Pancreas (tissue), 10 donors: ENCODE measurements at regions of chr10 and their contacts with region 1.

Region 1: GRCh38 chr10:74262856-74263255 is 111.8 kb downstream of the ADK start:
- DNase-seq: no peak
- ATAC-seq: no peak
- H3K4me3 ChIP-seq: no peak overlapping the region
- H3K27ac ChIP-seq: no peak overlapping the region
- H3K4me1 ChIP-seq: no peaks in the 10 kb centered on the region
- H3K27me3 ChIP-seq: no peaks in the 10 kb centered on the region
- CTCF ChIP-seq: no peak

Region 2: GRCh38 chr10:75035975-75036708 is 773.3 kb after region 1 on chr10:
- intact Hi-C with region 1: loop called in 1 of 3 experiments (anchors 10 kb)
- DNase-seq: no peak
- ATAC-seq: no peak
- H3K4me3 ChIP-seq: no peak overlapping the region
- H3K27ac ChIP-seq: no peak overlapping the region
- H3K4me1 ChIP-seq: no peaks in the 10 kb centered on the region
- H3K27me3 ChIP-seq: no peaks in the 10 kb centered on the region
- CTCF ChIP-seq: no peak

Region 3: GRCh38 chr10:75235375-75236177 is 972.7 kb after region 1 on chr10 and contains the start of gene COMTD1:
- intact Hi-C with region 1: loop called in 1 of 3 experiments (anchors 10 kb)
- DNase-seq: peak; percentile 97 to 100 (median 98)
- ATAC-seq: peak; percentile 72 to 87 (median 80)
- H3K4me3 ChIP-seq: peak within 1 kb of the TSS; percentile 60 to 91 (median 81)
- H3K27ac ChIP-seq: peak within 1 kb of the TSS; percentile 92 to 97 (median 94)
- H3K4me1 ChIP-seq: peaks cover 0 to 13% (median 7%) of the 10 kb centered on the region in 3 donors
- H3K27me3 ChIP-seq: no peaks in the 10 kb centered on the region
- CTCF ChIP-seq: peak; percentile 100
- total RNA-seq, gene COMTD1: 54.1 to 99.4 (median 64.0) TPM